ENCODE measurements at regions of chr13 and their contacts with region 1.

Region 1: GRCh38 chr13:41456768-41457588 is at the start of gene RGCC:
- DNase-seq: peak; percentile 80
- H3K4me3 ChIP-seq: peak within 1 kb of the TSS; percentile 85
- H3K27ac ChIP-seq: peak within 1 kb of the TSS; percentile 95
- H3K4me1 ChIP-seq: peaks cover 26% of the 10 kb centered on the region
- CTCF ChIP-seq: no peak
- total RNA-seq, gene RGCC: 219 and 274 TPM in 2 replicates

Region 2: GRCh38 chr13:41310963-41311606 is 145.9 kb before region 1 on chr13 and contains the start of gene NAA16:
- CTCF ChIA-PET with region 1: no interaction called
- POLR2A ChIA-PET with region 1: no interaction called
- intact Hi-C with region 1: loop called (anchors 1 kb)
- DNase-seq: peak; percentile 93
- H3K4me3 ChIP-seq: peak within 1 kb of the TSS; percentile 79
- H3K27ac ChIP-seq: peak within 1 kb of the TSS; percentile 74
- H3K4me1 ChIP-seq: peaks cover 37% of the 10 kb centered on the region
- CTCF ChIP-seq: 0 out of 2 replicates have a peak, but pooled peaks have one; percentile 1
- total RNA-seq, gene NAA16: 22.1 and 22.4 TPM in 2 replicates

Region 3: DNA sequence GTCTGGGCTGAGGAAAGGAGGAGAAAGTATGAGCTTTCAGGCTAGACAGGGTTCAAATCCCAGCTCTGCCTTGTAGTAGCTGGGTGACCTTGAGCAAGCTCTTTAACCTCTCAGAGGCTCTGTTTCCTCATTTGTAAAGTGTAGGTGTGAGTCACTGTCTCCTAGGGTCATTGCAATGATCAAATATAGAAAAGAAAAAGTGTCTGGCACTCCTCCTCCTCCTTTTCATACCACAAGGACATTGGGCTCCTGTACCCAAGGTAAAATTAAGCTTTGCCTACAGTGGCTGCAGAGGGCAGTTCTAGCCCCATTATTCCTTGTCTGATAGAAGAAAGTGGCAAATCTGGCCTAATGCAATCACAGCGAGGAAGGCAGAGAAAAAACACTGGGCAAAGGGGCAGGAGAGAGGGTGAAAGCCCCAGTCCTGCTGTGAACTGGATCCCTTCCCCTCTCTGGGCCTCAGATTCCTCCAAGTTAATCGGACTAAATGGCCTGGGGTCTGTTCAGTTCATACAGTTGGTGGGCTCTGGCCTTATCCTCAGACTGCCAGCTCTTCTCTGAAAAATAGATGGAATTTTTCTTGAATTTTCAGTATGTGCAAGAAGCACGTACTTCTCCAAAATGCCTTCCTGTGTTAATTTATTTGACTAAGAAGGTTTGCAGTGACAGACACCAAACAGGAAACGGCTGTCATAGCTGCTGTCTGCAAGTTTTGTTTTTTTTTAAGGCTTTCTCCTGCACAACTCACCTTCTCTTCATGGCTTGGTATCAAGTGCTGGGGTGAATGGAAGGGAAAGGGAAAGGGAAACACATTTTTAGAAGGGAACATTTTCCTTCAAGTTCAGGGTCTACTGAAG is 35.7 kb after region 1 on chr13:
- CTCF ChIA-PET with region 1: interaction called, 5 read pairs
- POLR2A ChIA-PET with region 1: interaction called, 82 read pairs
- intact Hi-C with region 1: no loop called
- DNase-seq: peak; percentile 78
- H3K4me3 ChIP-seq: peak overlapping the region; percentile 35
- H3K27ac ChIP-seq: peak overlapping the region; percentile 88
- H3K4me1 ChIP-seq: peaks cover 79% of the 10 kb centered on the region
- CTCF ChIP-seq: no peak

Region 4: DNA sequence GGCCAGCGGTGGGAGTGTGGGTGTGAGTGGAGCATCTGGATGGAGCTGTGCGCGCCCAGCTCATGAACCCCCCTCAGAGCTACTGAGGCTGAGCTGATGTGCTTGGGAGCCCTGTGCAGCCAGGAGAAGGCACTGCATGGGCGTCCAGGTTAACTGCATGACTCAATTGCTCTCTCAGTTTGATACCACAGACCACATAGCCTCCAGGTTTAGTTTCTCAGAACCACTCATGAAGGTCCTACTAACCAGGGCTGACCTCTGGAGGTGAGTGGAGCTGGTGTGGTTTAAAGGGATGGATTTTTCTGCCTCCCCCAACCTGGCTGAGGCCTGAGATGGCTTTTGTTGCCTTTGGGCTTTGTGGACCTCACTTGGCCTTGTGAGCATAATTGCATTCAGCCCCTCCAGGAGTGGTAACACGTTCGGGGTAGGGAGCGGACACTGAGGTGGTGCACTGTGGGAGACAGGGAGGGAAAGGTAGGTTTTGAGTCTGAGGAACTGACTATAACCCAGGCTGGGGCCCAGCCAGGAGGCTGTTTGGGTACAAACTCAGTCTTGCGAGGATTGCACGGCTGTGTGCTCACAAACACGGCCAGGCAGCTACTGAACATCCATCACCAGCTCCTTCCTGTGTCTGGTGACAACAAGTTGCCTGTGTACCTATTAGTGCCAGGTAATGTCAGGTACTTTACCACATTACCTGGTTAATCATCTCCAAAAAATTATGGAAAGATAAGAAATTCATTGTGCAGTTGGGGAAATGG is 97.8 kb after region 1 on chr13:
- CTCF ChIA-PET with region 1: interaction called, 5 read pairs
- POLR2A ChIA-PET with region 1: interaction called, 14 read pairs
- intact Hi-C with region 1: loop called (anchors 2 kb)
- DNase-seq: peak; percentile 89
- H3K4me3 ChIP-seq: peak overlapping the region; percentile 32
- H3K27ac ChIP-seq: peak overlapping the region; percentile 77
- H3K4me1 ChIP-seq: peaks cover 46% of the 10 kb centered on the region
- CTCF ChIP-seq: 0 out of 2 replicates have a peak, but pooled peaks have one; percentile 21

Region 5: GRCh38 chr13:41652727-41653361 is 195.9 kb after region 1 on chr13:
- CTCF ChIA-PET with region 1: interaction called, 13 read pairs
- POLR2A ChIA-PET with region 1: interaction called, 15 read pairs
- intact Hi-C with region 1: loop called (anchors 1 kb)
- DNase-seq: peak; percentile 79
- H3K4me3 ChIP-seq: no peak overlapping the region
- H3K27ac ChIP-seq: peak overlapping the region; percentile 62
- H3K4me1 ChIP-seq: peaks cover 54% of the 10 kb centered on the region
- CTCF ChIP-seq: peak; percentile 98

Region 6: GRCh38 chr13:41820581-41821237 is 363.7 kb after region 1 on chr13:
- CTCF ChIA-PET with region 1: no interaction called
- POLR2A ChIA-PET with region 1: no interaction called
- intact Hi-C with region 1: no loop called
- DNase-seq: no peak
- H3K4me3 ChIP-seq: no peak overlapping the region
- H3K27ac ChIP-seq: no peak overlapping the region
- H3K4me1 ChIP-seq: no peaks in the 10 kb centered on the region
- CTCF ChIP-seq: no peak

Measured in OCI-LY7 (cell line).